Esophagus muscularis mucosa (tissue), 4 donors: ENCODE measurements at regions of chr10 and their contacts with region 1.

Region 1: DNA sequence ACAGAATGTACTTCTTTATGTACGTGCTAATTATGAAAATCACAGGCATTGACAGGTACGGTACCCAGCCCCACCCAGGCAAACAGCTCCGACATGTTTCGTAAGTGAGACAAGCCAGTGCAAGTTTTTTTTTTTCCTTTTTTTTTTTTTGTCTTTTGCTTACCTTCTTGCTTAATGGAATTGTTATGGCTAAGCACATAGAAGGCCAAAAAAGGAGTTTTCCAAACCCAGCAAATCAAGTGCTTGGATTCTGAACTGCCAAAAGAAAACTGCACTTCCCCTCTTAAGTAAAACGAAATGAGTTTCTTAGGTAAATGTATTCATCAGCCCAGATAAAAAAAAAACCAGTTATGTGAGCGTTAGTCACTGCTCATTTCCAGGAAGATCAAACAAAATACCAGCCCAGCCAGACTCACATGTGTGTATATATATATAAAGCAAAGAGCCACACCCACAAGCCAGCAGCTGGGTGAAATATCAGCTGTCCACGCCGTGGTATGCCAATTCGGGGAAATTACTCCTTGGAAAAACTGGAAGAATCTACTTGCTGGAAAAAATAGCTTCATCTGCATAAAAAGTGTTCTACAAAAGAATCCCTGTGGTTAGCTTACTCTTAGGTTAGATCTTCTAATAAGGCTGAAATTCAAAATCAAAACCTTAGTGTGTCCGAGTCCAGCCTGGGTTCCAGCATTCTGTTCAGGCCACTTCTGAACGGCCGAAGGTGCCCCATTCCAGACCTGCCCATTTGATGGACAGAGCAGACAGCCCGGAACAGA is 8.0 kb downstream of the KLF6 start:
- DNase-seq: no peak
- H3K4me3 ChIP-seq: peak overlapping the region; percentile 9 to 79 (median 45)
- H3K27ac ChIP-seq: peak overlapping the region; percentile 97 to 100 (median 99)
- H3K4me1 ChIP-seq: peaks cover 66 to 77% (median 73%) of the 10 kb centered on the region in 4 donors
- H3K27me3 ChIP-seq: no peaks in the 10 kb centered on the region
- CTCF ChIP-seq: no peak
- EP300 ChIP-seq: peak; percentile 81
- POLR2A ChIP-seq: no peak

Region 2: DNA sequence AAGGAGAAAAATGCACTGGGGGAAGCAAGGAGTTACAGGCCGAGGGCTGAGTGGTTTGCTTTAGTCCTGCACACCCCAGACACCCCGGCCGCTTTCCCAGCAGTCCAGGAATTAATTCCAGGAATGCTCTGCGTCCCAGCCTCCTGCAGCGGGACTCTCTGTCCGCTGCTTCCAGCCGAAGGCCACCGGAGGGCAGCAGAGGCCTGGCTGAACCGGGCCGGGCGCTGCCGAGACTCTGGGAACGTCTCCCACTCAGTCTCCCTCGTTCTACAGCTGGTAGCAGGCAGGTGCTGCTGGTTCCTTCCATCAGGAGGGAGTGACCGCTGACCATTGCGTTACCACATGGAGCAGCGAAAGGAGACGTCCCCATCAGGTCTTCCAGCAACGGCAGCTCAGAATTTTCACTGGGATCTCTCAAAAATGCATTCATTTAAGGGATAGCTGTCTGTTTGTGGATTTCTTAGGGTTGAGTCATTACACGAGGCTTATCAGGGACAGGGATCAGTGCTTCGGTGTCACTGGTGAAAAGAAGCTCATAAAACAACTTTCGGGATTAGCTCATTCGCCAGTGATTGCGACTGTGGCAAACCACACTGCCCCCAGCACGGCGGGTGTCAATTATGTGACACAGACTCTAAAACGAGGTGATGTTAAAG is 579.5 kb before region 1 on chr10:
- intact Hi-C with region 1: loop called (anchors 2 kb)
- DNase-seq: no peak
- H3K4me3 ChIP-seq: peak overlapping the region; percentile 10 to 44 (median 10)
- H3K27ac ChIP-seq: peak overlapping the region in 3 of 4 donors; percentile 29 to 43 (median 35)
- H3K4me1 ChIP-seq: peaks cover 10 to 29% (median 22%) of the 10 kb centered on the region in 4 donors
- H3K27me3 ChIP-seq: peaks cover 0 to 3% (median 0%) of the 10 kb centered on the region in 4 donors
- CTCF ChIP-seq: peak; percentile 91 to 98 (median 94)
- EP300 ChIP-seq: no peak
- POLR2A ChIP-seq: no peak

Region 3: GRCh38 chr10:3248888-3249758 is 527.9 kb before region 1 on chr10:
- intact Hi-C with region 1: loop called (anchors 5 kb)
- DNase-seq: no peak
- H3K4me3 ChIP-seq: peak overlapping the region in 1 of 4 donors; percentile 19
- H3K27ac ChIP-seq: peak overlapping the region; percentile 70 to 83 (median 77)
- H3K4me1 ChIP-seq: peaks cover 3 to 22% (median 18%) of the 10 kb centered on the region in 4 donors
- H3K27me3 ChIP-seq: no peaks in the 10 kb centered on the region
- CTCF ChIP-seq: no peak
- EP300 ChIP-seq: no peak
- POLR2A ChIP-seq: no peak

Region 4: GRCh38 chr10:3472287-3473051 is 304.5 kb before region 1 on chr10:
- intact Hi-C with region 1: loop called (anchors 5 kb)
- DNase-seq: no peak
- H3K4me3 ChIP-seq: peak overlapping the region; percentile 32 to 44 (median 42)
- H3K27ac ChIP-seq: peak overlapping the region; percentile 83 to 91 (median 90)
- H3K4me1 ChIP-seq: peaks cover 34 to 67% (median 64%) of the 10 kb centered on the region in 4 donors
- H3K27me3 ChIP-seq: no peaks in the 10 kb centered on the region
- CTCF ChIP-seq: no peak
- EP300 ChIP-seq: peak; percentile 89
- POLR2A ChIP-seq: no peak

Region 5: GRCh38 chr10:3578159-3578558 is 198.8 kb before region 1 on chr10:
- intact Hi-C with region 1: no loop called
- DNase-seq: peak; percentile 53
- H3K4me3 ChIP-seq: no peak overlapping the region
- H3K27ac ChIP-seq: no peak overlapping the region
- H3K4me1 ChIP-seq: peaks cover 0 to 8% (median 3%) of the 10 kb centered on the region in 4 donors
- H3K27me3 ChIP-seq: no peaks in the 10 kb centered on the region
- CTCF ChIP-seq: no peak
- EP300 ChIP-seq: no peak
- POLR2A ChIP-seq: no peak

Region 6: GRCh38 chr10:3623746-3624145 is 153.2 kb before region 1 on chr10:
- intact Hi-C with region 1: loop called (anchors 10 kb)
- DNase-seq: no peak
- H3K4me3 ChIP-seq: peak overlapping the region in 1 of 4 donors; percentile 12
- H3K27ac ChIP-seq: peak overlapping the region; percentile 65 to 71 (median 70)
- H3K4me1 ChIP-seq: peaks cover 10 to 34% (median 27%) of the 10 kb centered on the region in 4 donors
- H3K27me3 ChIP-seq: no peaks in the 10 kb centered on the region
- CTCF ChIP-seq: no peak
- EP300 ChIP-seq: peak; percentile 26
- POLR2A ChIP-seq: no peak

Region 7: GRCh38 chr10:3825244-3825643 is 48.3 kb after region 1 on chr10:
- intact Hi-C with region 1: no loop called
- DNase-seq: no peak
- H3K4me3 ChIP-seq: no peak overlapping the region
- H3K27ac ChIP-seq: peak overlapping the region in 1 of 4 donors; percentile 9
- H3K4me1 ChIP-seq: peaks cover 9 to 18% (median 14%) of the 10 kb centered on the region in 4 donors
- H3K27me3 ChIP-seq: no peaks in the 10 kb centered on the region
- CTCF ChIP-seq: no peak
- EP300 ChIP-seq: no peak
- POLR2A ChIP-seq: no peak